Right cardiac atrium (tissue), 5 donors: ENCODE measurements at regions of chr10 and their contacts with region 1.

Region 1: GRCh38 chr10:95430231-95430951 is 130.8 kb downstream of the SORBS1 start:
- DNase-seq: peak in 1 of 3 donors; percentile 59
- ATAC-seq: peak; percentile 56 to 71
- H3K4me3 ChIP-seq: no peak overlapping the region
- H3K27ac ChIP-seq: peak overlapping the region; percentile 79
- H3K4me1 ChIP-seq: peaks cover 28% of the 10 kb centered on the region
- H3K27me3 ChIP-seq: no peaks in the 10 kb centered on the region

Region 2: DNA sequence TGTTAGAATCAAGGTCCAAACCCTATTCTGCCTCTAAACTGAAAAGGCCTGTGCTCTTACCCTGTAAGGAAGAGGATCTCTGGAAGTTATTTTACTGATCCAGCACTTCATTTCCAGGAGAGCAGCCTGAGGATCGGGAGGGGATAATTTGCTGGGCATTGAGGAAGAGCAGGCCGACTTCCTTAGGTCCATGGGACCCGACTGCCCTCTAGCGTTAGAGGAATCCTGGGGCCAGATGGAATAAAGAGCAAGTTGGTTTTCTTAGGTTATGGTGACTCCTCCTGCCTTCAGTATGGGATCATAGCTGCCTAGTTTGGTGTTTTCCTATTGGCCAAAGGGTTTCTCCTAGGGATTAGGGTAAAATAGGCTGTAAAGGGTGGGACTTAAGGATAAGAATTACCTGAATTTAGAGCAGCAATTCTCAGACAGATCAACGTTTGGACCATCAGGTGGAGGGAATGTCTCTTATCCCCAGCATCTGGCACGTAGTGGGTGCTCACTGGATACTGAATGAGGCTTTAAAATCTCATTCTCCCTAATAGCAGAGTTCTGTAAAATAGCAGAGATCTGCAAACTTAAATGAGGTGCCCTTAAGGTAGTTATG is 170.8 kb after region 1 on chr10:
- intact Hi-C with region 1: loop called (anchors 2 to 5 kb)
- DNase-seq: peak; percentile 77 to 91 (median 88)
- ATAC-seq: peak; percentile 89 to 90
- H3K4me3 ChIP-seq: no peak overlapping the region
- H3K27ac ChIP-seq: no peak overlapping the region
- H3K4me1 ChIP-seq: peaks cover 9% of the 10 kb centered on the region
- H3K27me3 ChIP-seq: no peaks in the 10 kb centered on the region